Thyroid gland (tissue), 4 donors: ENCODE measurements at regions of chr4 and their contacts with region 1.

Region 1: GRCh38 chr4:37568481-37568880 is 117.7 kb downstream of the RELL1 start:
- DNase-seq: no peak
- H3K4me3 ChIP-seq: no peak overlapping the region
- H3K27ac ChIP-seq: no peak overlapping the region
- H3K4me1 ChIP-seq: no peaks in the 10 kb centered on the region
- H3K27me3 ChIP-seq: no peaks in the 10 kb centered on the region
- CTCF ChIP-seq: no peak
- POLR2A ChIP-seq: no peak

Region 2: GRCh38 chr4:37452952-37453280 is 115.6 kb before region 1 on chr4:
- intact Hi-C with region 1: loop called (anchors 5 kb)
- DNase-seq: peak; percentile 71 to 72
- H3K4me3 ChIP-seq: peak overlapping the region; percentile 9 to 68 (median 56)
- H3K27ac ChIP-seq: peak overlapping the region in 2 of 3 donors; percentile 53 to 55
- H3K4me1 ChIP-seq: peaks cover 0 to 4% of the 10 kb centered on the region in 2 donors
- H3K27me3 ChIP-seq: no peaks in the 10 kb centered on the region
- CTCF ChIP-seq: peak in 5 of 6 experiments; percentile 22 to 75 (median 63)
- POLR2A ChIP-seq: no peak